ENCODE measurements at regions of chr15 and their contacts with region 1.

Region 1: GRCh38 chr15:34987985-34988873 is at the start of gene ZNF770:
- DNase-seq: peak; percentile 89
- ATAC-seq: peak; percentile 89
- H3K4me3 ChIP-seq: peak within 1 kb of the TSS; percentile 77
- H3K27ac ChIP-seq: peak within 1 kb of the TSS; percentile 95
- H3K4me1 ChIP-seq: peaks cover 0 to 6% of the 10 kb centered on the region in 2 experiments; a peak in 4 of 5 replicates
- H3K27me3 ChIP-seq: no peaks in the 10 kb centered on the region
- CTCF ChIP-seq: no peak
- EP300 ChIP-seq: 0 out of 2 replicates have a peak, but pooled peaks have one; percentile 22
- POLR2A ChIP-seq: peak; percentile 93
- RAD21 ChIP-seq: no peak
- polyA plus RNA-seq, gene ZNF770: 3.4 to 5.2 TPM

Region 2: GRCh38 chr15:34855893-34856292 is 132.3 kb before region 1 on chr15:
- CTCF ChIA-PET with region 1: no interaction called
- POLR2A ChIA-PET with region 1: no interaction called
- in situ Hi-C with region 1: no loop called
- intact Hi-C with region 1: no loop called
- DNase-seq: no peak
- ATAC-seq: no peak
- H3K4me3 ChIP-seq: no peak overlapping the region
- H3K27ac ChIP-seq: no peak overlapping the region
- H3K4me1 ChIP-seq: no peaks in the 10 kb centered on the region
- H3K27me3 ChIP-seq: no peaks in the 10 kb centered on the region
- CTCF ChIP-seq: no peak
- EP300 ChIP-seq: no peak
- POLR2A ChIP-seq: no peak
- RAD21 ChIP-seq: no peak

Region 3: GRCh38 chr15:34969340-34970097 is 18.7 kb before region 1 on chr15 and contains the start of gene AQR:
- CTCF ChIA-PET with region 1: no interaction called
- POLR2A ChIA-PET with region 1: interaction called, 19 read pairs
- in situ Hi-C with region 1: no loop called
- intact Hi-C with region 1: no loop called
- DNase-seq: peak; percentile 85 to 97 (median 88)
- ATAC-seq: peak; percentile 99
- H3K4me3 ChIP-seq: peak within 1 kb of the TSS; percentile 93
- H3K27ac ChIP-seq: peak within 1 kb of the TSS; percentile 74
- H3K4me1 ChIP-seq: peaks cover 6 to 13% of the 10 kb centered on the region in 2 experiments; a peak in 4 of 5 replicates
- H3K27me3 ChIP-seq: no peaks in the 10 kb centered on the region
- CTCF ChIP-seq: peak; percentile 79 to 87 (median 80)
- EP300 ChIP-seq: peak; percentile 71
- POLR2A ChIP-seq: peak; percentile 97
- RAD21 ChIP-seq: peak in 1 of 2 experiments; percentile 45; a peak in 2 of 4 replicates
- polyA plus RNA-seq, gene AQR: 27.9 to 39.2 TPM

Region 4: DNA sequence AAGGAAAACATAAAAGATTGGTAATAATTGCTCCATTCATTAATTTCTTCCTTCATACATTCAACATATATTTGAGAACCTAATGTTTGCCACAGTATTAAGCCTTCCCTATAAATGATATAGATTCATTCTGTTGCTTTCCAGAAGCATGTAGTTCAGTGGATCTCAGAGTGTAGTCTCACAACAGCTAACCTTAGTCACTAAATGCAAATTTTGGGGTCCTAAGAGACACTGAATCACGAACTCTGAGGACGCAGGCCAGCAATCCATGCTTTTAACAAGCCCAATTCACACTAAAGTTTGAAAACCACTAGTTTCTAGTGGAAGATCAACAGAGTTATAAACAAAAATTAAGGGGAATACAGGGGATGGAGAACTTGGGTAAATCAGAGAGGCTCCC is 11.5 kb before region 1 on chr15:
- CTCF ChIA-PET with region 1: no interaction called
- POLR2A ChIA-PET with region 1: interaction called, 16 read pairs
- in situ Hi-C with region 1: no loop called
- intact Hi-C with region 1: no loop called
- DNase-seq: no peak
- ATAC-seq: no peak
- H3K4me3 ChIP-seq: no peak overlapping the region
- H3K27ac ChIP-seq: no peak overlapping the region
- H3K4me1 ChIP-seq: peaks cover 2 to 5% of the 10 kb centered on the region in 2 experiments; a peak in 3 of 5 replicates
- H3K27me3 ChIP-seq: no peaks in the 10 kb centered on the region
- CTCF ChIP-seq: no peak
- EP300 ChIP-seq: no peak
- POLR2A ChIP-seq: no peak
- RAD21 ChIP-seq: no peak

Region 5: DNA sequence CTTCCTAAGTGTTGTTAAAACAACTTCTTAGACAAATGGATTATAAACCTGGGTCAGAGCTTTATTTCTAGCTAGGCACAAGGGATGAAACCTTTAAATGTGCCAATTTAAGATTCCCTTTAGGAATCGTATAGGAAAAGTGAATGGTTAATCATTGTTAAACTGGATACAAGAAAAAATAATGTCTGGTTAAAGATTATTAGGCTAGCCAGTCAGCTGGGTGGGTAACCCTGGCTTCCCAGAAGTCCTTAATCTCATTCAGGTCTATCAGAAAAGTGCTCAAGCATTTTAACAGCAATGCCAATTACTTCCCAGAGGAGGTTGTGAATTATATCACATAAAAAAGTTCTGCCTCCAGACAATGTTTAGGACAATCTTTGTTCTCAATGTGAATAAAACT is 59.3 kb after region 1 on chr15:
- CTCF ChIA-PET with region 1: no interaction called
- POLR2A ChIA-PET with region 1: no interaction called
- in situ Hi-C with region 1: no loop called
- intact Hi-C with region 1: no loop called
- DNase-seq: no peak
- ATAC-seq: no peak
- H3K4me3 ChIP-seq: no peak overlapping the region
- H3K27ac ChIP-seq: no peak overlapping the region
- H3K4me1 ChIP-seq: no peaks in the 10 kb centered on the region; a peak in 1 of 5 replicates
- H3K27me3 ChIP-seq: no peaks in the 10 kb centered on the region
- CTCF ChIP-seq: no peak
- EP300 ChIP-seq: no peak
- POLR2A ChIP-seq: no peak
- RAD21 ChIP-seq: no peak

Region 6: GRCh38 chr15:35061825-35062737 is 73.9 kb after region 1 on chr15:
- CTCF ChIA-PET with region 1: no interaction called
- POLR2A ChIA-PET with region 1: no interaction called
- in situ Hi-C with region 1: no loop called
- intact Hi-C with region 1: loop called (anchors 10 kb)
- DNase-seq: no peak
- ATAC-seq: no peak
- H3K4me3 ChIP-seq: no peak overlapping the region
- H3K27ac ChIP-seq: no peak overlapping the region
- H3K4me1 ChIP-seq: peaks cover 0 to 3% of the 10 kb centered on the region in 2 experiments; a peak in 2 of 5 replicates
- H3K27me3 ChIP-seq: no peaks in the 10 kb centered on the region
- CTCF ChIP-seq: no peak
- EP300 ChIP-seq: no peak
- POLR2A ChIP-seq: no peak
- RAD21 ChIP-seq: no peak

Region 7: DNA sequence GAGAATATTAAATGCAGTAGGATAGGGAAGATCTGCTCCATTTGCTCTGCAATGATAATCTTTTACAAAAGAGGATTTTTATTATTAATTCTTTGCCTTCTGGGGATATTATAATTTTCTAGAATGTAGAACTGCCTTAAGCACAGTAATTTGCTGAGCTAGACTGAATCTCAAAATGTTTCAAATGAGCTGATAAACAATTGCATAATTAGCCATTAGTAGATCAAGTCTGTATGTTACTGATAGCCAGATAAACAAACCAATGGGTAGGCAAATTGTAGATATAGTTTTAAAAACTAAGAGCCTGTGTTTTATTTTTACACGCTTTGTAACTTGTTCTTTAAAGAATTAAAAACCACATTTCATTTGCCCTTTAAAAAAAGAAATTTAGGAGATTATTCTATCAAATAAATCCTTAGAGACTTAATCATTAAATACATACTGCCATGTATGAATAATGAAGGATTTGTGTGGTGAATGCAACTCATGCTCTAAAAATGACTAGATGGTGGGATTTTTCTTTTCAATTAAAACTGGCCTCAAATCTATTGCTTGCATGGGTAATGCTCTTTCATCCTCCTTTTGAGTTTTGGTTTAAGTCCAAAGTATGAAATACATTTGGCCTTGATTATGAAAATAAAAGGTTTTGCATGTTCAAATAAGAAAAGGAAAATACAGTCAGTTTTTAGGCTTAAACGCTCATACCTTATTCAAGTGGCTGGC is 129.5 kb after region 1 on chr15:
- CTCF ChIA-PET with region 1: no interaction called
- POLR2A ChIA-PET with region 1: no interaction called
- in situ Hi-C with region 1: no loop called
- intact Hi-C with region 1: no loop called
- DNase-seq: no peak
- ATAC-seq: no peak
- H3K4me3 ChIP-seq: no peak overlapping the region
- H3K27ac ChIP-seq: no peak overlapping the region
- H3K4me1 ChIP-seq: no peaks in the 10 kb centered on the region
- H3K27me3 ChIP-seq: no peaks in the 10 kb centered on the region
- CTCF ChIP-seq: no peak
- EP300 ChIP-seq: no peak
- POLR2A ChIP-seq: no peak
- RAD21 ChIP-seq: no peak

Region 8: DNA sequence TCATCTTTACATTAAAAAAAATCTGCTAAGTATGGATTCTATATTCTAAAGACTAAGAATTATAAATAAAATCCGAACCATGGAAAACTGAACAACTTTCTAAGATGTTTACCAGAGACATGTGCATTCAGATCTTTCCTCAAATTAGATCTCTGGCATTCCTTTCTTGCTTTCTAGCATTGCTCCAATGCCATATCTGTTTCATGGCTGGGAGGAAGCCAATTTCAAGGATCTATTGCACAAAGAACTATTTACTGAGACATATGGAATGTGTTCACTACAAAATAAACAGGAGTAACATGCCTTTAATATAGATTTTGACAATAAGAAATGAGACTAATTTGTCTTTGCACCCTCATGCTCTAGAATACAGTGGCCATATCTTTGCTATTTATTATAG is 142.0 kb after region 1 on chr15:
- CTCF ChIA-PET with region 1: no interaction called
- POLR2A ChIA-PET with region 1: no interaction called
- in situ Hi-C with region 1: no loop called
- intact Hi-C with region 1: no loop called
- DNase-seq: no peak
- ATAC-seq: no peak
- H3K4me3 ChIP-seq: no peak overlapping the region
- H3K27ac ChIP-seq: no peak overlapping the region
- H3K4me1 ChIP-seq: no peaks in the 10 kb centered on the region; a peak in 1 of 5 replicates
- H3K27me3 ChIP-seq: no peaks in the 10 kb centered on the region
- CTCF ChIP-seq: no peak
- EP300 ChIP-seq: no peak
- POLR2A ChIP-seq: no peak
- RAD21 ChIP-seq: no peak

Region 9: DNA sequence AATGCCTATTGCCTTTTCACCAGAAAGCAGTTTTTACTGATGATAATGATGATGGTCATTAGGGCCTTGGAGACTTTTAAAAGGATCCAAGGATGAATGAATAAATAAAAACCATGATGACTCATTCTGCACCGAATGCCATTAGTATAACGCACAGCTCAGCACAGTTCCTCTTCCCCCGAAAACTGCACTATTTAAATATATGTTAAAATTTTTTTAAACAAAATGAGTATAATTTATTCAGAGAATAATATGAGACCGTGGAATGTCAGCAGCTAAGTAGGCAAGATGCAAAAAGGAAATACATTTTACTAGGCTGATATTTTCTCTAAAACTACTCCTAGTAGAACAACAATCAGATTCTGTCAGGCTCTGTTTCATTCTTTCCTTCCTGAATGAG is 180.2 kb after region 1 on chr15:
- CTCF ChIA-PET with region 1: no interaction called
- POLR2A ChIA-PET with region 1: no interaction called
- in situ Hi-C with region 1: no loop called
- intact Hi-C with region 1: loop called (anchors 5 kb)
- DNase-seq: peak in 1 of 4 experiments; percentile 49
- ATAC-seq: peak; percentile 54
- H3K4me3 ChIP-seq: no peak overlapping the region
- H3K27ac ChIP-seq: peak overlapping the region; percentile 94
- H3K4me1 ChIP-seq: peaks cover 6 to 43% of the 10 kb centered on the region in 2 experiments; a peak in 4 of 5 replicates
- H3K27me3 ChIP-seq: no peaks in the 10 kb centered on the region
- CTCF ChIP-seq: no peak
- EP300 ChIP-seq: no peak
- POLR2A ChIP-seq: no peak
- RAD21 ChIP-seq: no peak

Region 10: GRCh38 chr15:35545824-35546510 is 557.7 kb after region 1 on chr15 and contains the start of gene DPH6:
- CTCF ChIA-PET with region 1: no interaction called
- POLR2A ChIA-PET with region 1: no interaction called
- in situ Hi-C with region 1: no loop called
- intact Hi-C with region 1: loop called (anchors 5 kb)
- DNase-seq: peak; percentile 77 to 90 (median 86)
- ATAC-seq: peak; percentile 85
- H3K4me3 ChIP-seq: peak within 1 kb of the TSS; percentile 57
- H3K27ac ChIP-seq: peak within 1 kb of the TSS; percentile 97
- H3K4me1 ChIP-seq: peaks cover 17 to 32% of the 10 kb centered on the region in 2 experiments; a peak in 4 of 5 replicates
- H3K27me3 ChIP-seq: no peaks in the 10 kb centered on the region
- CTCF ChIP-seq: no peak
- EP300 ChIP-seq: no peak
- POLR2A ChIP-seq: peak; percentile 90
- RAD21 ChIP-seq: no peak
- polyA plus RNA-seq, gene DPH6: 58.7 to 69.1 TPM

Measured in K562 (cell line).